ENCODE measurements at regions of chr6 and their contacts with region 1.

Region 1: DNA sequence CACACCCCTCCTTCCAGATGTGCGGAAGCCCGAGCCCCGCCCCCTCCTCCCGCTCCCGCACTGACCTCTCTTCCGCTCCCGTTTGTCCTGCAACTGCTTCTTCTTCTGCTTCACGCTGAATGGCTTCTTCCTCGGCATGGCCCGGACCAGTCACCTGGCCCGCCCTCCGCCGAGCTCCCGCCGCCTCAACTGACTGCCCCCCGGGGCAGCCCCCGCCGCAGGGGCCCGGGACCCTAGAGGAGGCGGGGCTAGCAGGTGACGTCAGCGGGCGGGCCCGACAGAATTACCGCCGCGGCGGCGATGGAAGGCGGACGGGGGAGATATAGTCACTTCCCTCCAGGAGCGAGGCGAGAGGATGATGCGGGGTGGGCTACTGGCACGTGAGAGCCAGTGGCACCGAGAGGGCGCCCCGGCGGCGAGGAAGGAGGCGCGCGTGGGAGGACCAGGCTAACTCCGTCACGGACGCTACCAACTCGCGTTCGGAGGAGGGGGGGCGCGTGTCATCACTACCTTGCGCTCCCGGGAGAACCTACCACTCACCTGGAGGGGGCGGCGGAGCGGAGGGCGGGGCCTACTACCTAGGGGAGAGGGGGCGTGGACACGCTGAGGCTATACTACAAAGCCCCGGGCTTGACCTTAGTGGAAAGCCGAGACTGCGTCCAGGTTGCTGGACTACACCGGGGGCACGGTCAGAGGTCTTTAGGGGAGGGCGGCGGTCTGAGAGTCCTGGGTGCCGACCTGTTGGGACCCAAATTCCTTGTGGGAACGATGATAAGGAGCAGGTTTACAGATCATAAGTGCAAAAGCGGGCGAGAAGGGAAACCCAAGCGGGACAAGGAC is at the start of gene GNL1:
- DNase-seq: peak; percentile 96
- H3K4me3 Mint-ChIP-seq: peak within 1 kb of the TSS; percentile 98
- H3K27ac Mint-ChIP-seq: peak within 1 kb of the TSS; percentile 100
- H3K4me1 Mint-ChIP-seq: peaks cover 22% of the 10 kb centered on the region
- H3K27me3 Mint-ChIP-seq: no peaks in the 10 kb centered on the region
- total RNA-seq, gene GNL1: 79.8 and 88.2 TPM in 2 replicates

Region 2: GRCh38 chr6:30493643-30494250 is 62.5 kb before region 1 on chr6:
- intact Hi-C with region 1: no loop called
- DNase-seq: no peak
- H3K4me3 Mint-ChIP-seq: peak overlapping the region; percentile 61
- H3K27ac Mint-ChIP-seq: peak overlapping the region; percentile 56
- H3K4me1 Mint-ChIP-seq: peaks cover 68% of the 10 kb centered on the region
- H3K27me3 Mint-ChIP-seq: no peaks in the 10 kb centered on the region

Region 3: DNA sequence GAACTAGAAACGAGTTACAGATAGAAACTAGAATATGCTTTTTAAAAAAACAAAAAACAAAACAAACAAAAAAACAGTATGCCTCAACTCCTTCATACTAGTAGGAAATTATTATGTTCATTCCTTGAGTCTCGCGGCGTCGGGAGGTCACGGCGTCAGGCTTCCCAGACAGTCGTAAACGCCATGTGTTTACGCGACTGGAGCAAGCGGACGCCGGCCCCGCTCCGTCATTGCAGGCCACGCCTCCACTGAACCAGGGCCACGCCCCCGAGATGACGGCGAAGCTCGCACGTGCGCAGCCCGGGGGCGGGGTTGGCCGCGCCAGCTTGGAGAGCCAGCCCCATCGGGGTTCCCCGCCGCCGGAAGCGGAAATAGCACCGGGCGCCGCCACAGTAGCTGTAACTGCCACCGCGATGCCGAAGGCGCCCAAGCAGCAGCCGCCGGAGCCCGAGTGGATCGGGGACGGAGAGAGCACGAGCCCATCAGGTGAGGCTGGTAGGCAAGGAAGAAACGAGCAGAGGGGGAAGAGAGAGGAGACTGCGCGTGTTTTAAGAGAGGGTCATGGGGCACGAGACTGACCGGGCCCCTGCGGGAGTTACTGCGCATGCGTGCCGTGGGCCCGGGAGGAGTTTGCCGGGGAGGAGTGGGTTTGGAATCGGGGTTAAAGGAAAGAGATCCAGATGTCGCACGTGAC is 14.9 kb after region 1 on chr6 and contains the start of gene ABCF1:
- intact Hi-C with region 1: loop called (anchors 1 kb)
- DNase-seq: peak; percentile 99
- H3K4me3 Mint-ChIP-seq: peak within 1 kb of the TSS; percentile 91
- H3K27ac Mint-ChIP-seq: peak within 1 kb of the TSS; percentile 92
- H3K4me1 Mint-ChIP-seq: peaks cover 56% of the 10 kb centered on the region
- H3K27me3 Mint-ChIP-seq: no peaks in the 10 kb centered on the region
- total RNA-seq, gene ABCF1: 102 and 112 TPM in 2 replicates

Region 4: DNA sequence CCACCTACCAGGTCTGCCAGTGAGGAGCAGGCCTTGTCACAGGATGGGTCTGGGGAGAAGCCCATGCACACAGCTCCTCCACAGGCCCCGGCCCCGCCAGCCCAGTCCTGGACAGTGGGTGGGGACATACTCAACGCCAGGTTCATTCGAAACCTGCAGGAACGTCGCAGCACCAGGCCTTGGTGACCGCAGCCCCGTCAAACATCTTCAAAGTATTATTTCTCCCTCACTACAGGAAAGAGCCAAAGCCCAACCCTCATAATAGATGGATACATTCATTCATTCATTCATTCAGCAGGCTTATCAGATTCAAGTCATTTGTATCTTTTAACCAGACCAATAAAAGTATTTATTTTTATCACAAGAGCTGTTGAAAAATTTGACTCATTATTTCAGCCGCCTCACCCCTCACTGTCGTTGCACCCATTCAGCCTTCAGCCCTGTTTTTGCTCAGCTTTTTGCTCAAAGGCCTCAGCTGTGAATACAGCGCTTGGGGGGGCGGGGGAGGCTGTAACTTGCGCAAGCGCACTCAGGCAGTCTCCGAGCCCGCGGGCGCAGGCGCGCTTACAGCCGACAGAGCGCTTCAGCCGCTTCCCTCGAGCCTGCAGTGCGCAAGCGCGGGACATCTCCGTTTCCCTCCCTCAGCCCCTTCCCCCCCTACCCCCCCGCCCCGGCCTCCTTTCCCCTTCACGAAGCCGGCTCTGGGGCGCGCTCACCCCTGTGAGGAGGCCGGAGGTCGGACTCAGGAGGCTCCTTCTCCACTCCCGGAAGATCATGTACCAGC is 90.4 kb after region 1 on chr6 and contains the start of gene C6orf136:
- intact Hi-C with region 1: loop called (anchors 1 kb)
- DNase-seq: peak; percentile 89
- H3K4me3 Mint-ChIP-seq: peak within 1 kb of the TSS; percentile 88
- H3K27ac Mint-ChIP-seq: peak within 1 kb of the TSS; percentile 89
- H3K4me1 Mint-ChIP-seq: peaks cover 18% of the 10 kb centered on the region
- H3K27me3 Mint-ChIP-seq: no peaks in the 10 kb centered on the region
- total RNA-seq, gene C6orf136: 23.1 and 28.2 TPM in 2 replicates

Region 5: GRCh38 chr6:30686908-30687658 is 130.8 kb after region 1 on chr6:
- intact Hi-C with region 1: loop called (anchors 5 kb)
- DNase-seq: peak; percentile 79
- H3K4me3 Mint-ChIP-seq: peak overlapping the region; percentile 97
- H3K27ac Mint-ChIP-seq: peak overlapping the region; percentile 93
- H3K4me1 Mint-ChIP-seq: peaks cover 33% of the 10 kb centered on the region
- H3K27me3 Mint-ChIP-seq: no peaks in the 10 kb centered on the region

Region 6: GRCh38 chr6:30752157-30752927 is 196.1 kb after region 1 on chr6:
- intact Hi-C with region 1: no loop called
- DNase-seq: no peak
- H3K4me3 Mint-ChIP-seq: no peak overlapping the region
- H3K27ac Mint-ChIP-seq: no peak overlapping the region
- H3K4me1 Mint-ChIP-seq: peaks cover 20% of the 10 kb centered on the region
- H3K27me3 Mint-ChIP-seq: no peaks in the 10 kb centered on the region

Measured in activated T-helper 2 cell treated with anti-CD3 and anti-CD28 coated beads, Interferon-gamma antibody, Interleukin-2, Interleukin-4, amounts not matched to agents 10 μg/mL and 5 μg/mL and 100 μg/mL, durations not matched to agents 14 hours and 24 hours and 36 hours (primary cell).